Activated CD8-positive, alpha-beta T cell treated with anti-CD3 and anti-CD28 coated beads for 36 hours (primary cell): ENCODE measurements at regions of chr14 and their contacts with region 1.

Region 1: DNA sequence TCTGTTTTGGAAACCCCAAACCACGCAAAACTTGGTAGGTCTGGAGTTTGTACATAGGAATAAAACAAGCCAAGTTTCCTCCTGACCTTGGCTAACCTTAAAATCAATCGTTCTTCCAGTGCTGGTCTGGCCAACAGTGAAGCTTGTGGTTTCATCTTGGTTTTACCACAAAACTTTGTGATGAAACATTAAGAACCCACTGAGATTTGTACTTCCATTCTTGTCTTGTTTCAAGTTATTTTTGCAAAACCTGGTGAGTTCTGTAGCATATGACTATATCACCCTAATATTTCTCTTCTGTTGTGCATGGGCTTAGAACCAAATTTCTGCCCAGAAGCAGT is 26.4 kb downstream of the SIX1 start:
- DNase-seq: no peak
- ATAC-seq: no peak
- H3K4me3 Mint-ChIP-seq: no peak overlapping the region
- H3K27ac Mint-ChIP-seq: no peak overlapping the region
- H3K4me1 Mint-ChIP-seq: no peaks in the 10 kb centered on the region
- H3K27me3 Mint-ChIP-seq: peaks cover 20% of the 10 kb centered on the region
- CTCF ChIP-seq: no peak

Region 2: GRCh38 chr14:60602291-60602690 is 20.6 kb before region 1 on chr14:
- CTCF ChIA-PET with region 1: interaction called, 11 read pairs
- POLR2A ChIA-PET with region 1: no interaction called
- intact Hi-C with region 1: no loop called
- DNase-seq: no peak
- ATAC-seq: no peak
- H3K4me3 Mint-ChIP-seq: no peak overlapping the region
- H3K27ac Mint-ChIP-seq: no peak overlapping the region
- H3K4me1 Mint-ChIP-seq: no peaks in the 10 kb centered on the region
- H3K27me3 Mint-ChIP-seq: peaks cover 17% of the 10 kb centered on the region
- CTCF ChIP-seq: no peak

Region 3: GRCh38 chr14:60637479-60638315 is 14.8 kb after region 1 on chr14:
- CTCF ChIA-PET with region 1: interaction called, 20 read pairs
- POLR2A ChIA-PET with region 1: no interaction called
- intact Hi-C with region 1: no loop called
- DNase-seq: no peak
- ATAC-seq: peak; percentile 25
- H3K4me3 Mint-ChIP-seq: peak overlapping the region; percentile 31
- H3K27ac Mint-ChIP-seq: no peak overlapping the region
- H3K4me1 Mint-ChIP-seq: peaks cover 16% of the 10 kb centered on the region
- H3K27me3 Mint-ChIP-seq: peaks cover 65% of the 10 kb centered on the region
- CTCF ChIP-seq: no peak

Region 4: DNA sequence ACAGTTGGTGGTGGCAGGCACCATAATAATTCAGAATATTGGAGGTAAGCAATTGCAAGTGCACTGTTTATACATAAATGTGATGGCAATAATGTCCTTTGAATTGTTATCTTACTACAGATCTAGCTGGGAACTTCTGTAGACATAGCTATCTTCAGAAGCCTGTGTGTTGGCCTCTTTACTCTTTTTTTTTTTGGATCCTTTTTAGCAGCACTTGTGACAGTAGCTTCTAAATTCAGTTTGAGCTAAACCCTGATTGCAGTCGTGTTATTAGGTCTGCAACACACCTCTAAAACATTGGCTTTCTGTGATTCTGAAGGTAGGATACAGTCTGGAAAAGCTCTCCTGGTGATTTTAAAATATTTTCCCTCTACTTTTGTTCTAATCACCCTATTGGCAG is 396.6 kb after region 1 on chr14:
- CTCF ChIA-PET with region 1: interaction called, 10 read pairs
- POLR2A ChIA-PET with region 1: no interaction called
- intact Hi-C with region 1: no loop called
- DNase-seq: no peak
- ATAC-seq: no peak
- H3K4me3 Mint-ChIP-seq: no peak overlapping the region
- H3K27ac Mint-ChIP-seq: no peak overlapping the region
- H3K4me1 Mint-ChIP-seq: no peaks in the 10 kb centered on the region
- H3K27me3 Mint-ChIP-seq: no peaks in the 10 kb centered on the region
- CTCF ChIP-seq: no peak

Region 5: DNA sequence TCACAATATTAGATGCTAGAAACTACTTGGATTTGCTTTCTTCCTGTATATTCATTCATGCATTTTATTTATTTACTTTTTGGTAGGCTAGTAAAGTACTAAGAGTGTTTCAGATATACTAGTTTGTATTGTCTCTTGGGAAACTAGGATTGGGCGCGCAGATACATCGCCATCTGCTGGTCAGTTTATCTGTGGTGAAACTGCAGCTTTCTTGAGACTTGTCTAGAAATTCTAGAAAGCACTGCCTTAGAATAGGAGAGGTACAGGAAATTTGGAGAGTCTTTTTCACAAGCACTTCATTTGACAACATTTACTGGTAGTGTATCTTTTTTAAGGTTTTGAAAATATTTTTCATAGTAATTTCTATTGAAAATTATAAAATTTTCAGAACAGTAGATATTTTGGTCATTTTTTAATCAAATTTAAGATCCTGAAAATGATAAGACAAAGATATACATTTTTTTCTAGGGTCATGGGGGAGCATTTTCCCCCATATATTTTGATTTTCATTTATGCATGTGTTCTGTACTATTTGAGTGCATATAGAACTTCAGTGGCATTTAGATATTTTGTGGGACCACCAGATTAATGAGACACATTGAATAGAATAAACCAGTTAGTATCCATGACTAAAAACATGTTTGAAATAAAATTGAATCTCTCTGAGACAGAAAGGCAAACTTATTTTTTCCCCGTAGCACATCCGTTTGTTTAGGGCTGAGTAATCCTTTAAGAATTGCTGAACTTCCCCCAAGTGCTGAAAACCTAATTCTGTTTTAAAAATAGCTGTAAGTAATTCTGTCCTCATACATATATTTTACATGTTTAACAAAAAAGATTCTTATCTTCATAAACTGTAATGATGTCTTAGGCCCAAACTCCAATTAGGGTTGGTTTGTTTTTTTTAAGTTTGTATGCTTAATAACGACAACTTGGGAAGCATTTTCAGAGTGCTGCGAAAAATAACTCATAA is 402.6 kb after region 1 on chr14:
- CTCF ChIA-PET with region 1: interaction called, 39 read pairs
- POLR2A ChIA-PET with region 1: no interaction called
- intact Hi-C with region 1: loop called (anchors 1 kb)
- DNase-seq: peak; percentile 73
- ATAC-seq: peak; percentile 61
- H3K4me3 Mint-ChIP-seq: no peak overlapping the region
- H3K27ac Mint-ChIP-seq: no peak overlapping the region
- H3K4me1 Mint-ChIP-seq: no peaks in the 10 kb centered on the region
- H3K27me3 Mint-ChIP-seq: no peaks in the 10 kb centered on the region
- CTCF ChIP-seq: peak; percentile 94

Region 6: GRCh38 chr14:61033054-61033453 is 410.2 kb after region 1 on chr14:
- CTCF ChIA-PET with region 1: interaction called, 39 read pairs
- POLR2A ChIA-PET with region 1: no interaction called
- intact Hi-C with region 1: no loop called
- DNase-seq: no peak
- ATAC-seq: no peak
- H3K4me3 Mint-ChIP-seq: no peak overlapping the region
- H3K27ac Mint-ChIP-seq: no peak overlapping the region
- H3K4me1 Mint-ChIP-seq: peaks cover 6% of the 10 kb centered on the region
- H3K27me3 Mint-ChIP-seq: no peaks in the 10 kb centered on the region
- CTCF ChIP-seq: no peak

Region 7: DNA sequence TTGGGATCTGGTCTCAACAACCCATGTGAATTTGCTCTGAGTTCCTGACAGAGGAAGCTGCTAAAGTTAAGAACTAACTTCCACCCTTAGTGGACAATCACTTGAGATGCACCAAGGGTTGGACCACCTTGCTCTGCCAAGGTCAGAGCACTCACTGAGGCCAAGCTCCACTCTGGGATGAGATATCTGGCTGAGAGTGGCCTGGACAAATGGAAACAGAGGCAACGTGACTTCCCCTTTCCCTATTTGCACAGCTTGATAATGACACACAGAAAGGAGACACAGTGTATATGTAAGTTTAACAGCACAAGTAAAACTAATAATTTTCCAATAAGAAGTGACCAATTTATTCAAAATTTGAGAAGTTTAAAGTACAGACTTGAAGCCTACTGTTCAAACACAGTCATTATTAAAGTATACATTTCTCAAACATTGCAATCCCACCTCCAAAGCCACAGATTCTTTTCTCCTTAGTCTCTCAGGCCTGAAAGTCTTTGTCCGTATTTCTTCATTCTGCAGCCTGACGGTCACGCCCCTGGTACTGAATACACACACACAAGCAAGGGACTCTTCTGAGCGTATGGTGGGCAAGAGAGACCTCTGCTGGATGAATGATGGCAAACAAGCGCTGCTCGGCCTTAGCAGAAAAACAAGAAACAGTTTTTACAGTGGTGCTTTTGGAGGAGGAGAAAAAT is 629.6 kb after region 1 on chr14:
- CTCF ChIA-PET with region 1: interaction called, 46 read pairs
- POLR2A ChIA-PET with region 1: no interaction called
- intact Hi-C with region 1: loop called (anchors 1 kb)
- DNase-seq: peak; percentile 80
- ATAC-seq: peak; percentile 94
- H3K4me3 Mint-ChIP-seq: no peak overlapping the region
- H3K27ac Mint-ChIP-seq: no peak overlapping the region
- H3K4me1 Mint-ChIP-seq: peaks cover 7% of the 10 kb centered on the region
- H3K27me3 Mint-ChIP-seq: peaks cover 10% of the 10 kb centered on the region
- CTCF ChIP-seq: peak; percentile 91